B cell (primary cell): ENCODE measurements at regions of chr19 and their contacts with region 1.

Region 1: DNA sequence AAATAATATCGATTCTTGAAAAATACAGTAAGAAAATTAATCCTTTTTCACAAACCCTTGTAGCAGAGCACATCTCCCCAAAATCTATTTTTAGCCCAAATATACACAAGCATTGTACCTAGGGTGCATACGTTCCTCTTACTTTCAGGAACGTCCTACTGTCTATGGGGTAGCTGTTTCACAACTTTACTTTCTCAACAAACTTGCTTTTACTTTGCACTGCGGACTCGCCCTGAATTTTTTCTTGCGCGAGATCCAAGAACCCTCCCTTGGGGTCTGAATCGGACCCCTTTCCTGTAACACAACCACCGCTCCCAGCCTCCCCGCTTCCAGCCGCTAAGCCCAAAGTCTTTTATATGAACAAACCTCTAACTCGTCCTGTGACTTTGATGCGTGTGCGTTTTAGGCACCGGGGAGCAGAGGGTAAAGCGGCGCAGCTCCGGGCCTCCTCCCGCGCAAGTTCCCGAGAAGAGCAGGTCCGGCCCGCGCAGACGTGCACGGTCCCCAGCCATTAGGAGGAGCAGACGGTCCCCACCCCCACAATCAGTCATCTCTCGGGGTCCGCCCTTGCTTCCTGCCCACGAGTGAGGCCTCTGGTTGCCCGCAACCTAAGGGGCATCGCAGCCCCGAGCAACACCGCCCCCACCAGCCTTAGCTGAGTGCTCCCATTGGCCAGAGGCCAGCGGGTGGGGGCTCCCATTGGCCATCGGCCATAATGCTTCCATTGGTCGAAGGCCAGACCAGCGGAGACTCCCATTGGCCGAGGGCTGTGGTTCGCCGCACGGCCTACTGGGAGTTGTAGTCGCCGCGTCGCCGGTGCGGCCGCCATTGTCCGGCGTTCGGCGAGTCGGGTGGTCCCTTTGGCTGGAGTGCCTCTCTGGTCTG is at the start of gene ZNF8:
- DNase-seq: peak; percentile 96
- ATAC-seq: peak; percentile 98
- H3K4me3 ChIP-seq: peak within 1 kb of the TSS; percentile 72 to 98 (median 95)
- H3K4me3 Mint-ChIP-seq: peak within 1 kb of the TSS; percentile 91
- H3K27ac ChIP-seq: peak within 1 kb of the TSS; percentile 73 to 86
- H3K27ac Mint-ChIP-seq: peak within 1 kb of the TSS; percentile 93
- H3K4me1 ChIP-seq: peaks cover 13 to 19% of the 10 kb centered on the region in 2 donors
- H3K4me1 Mint-ChIP-seq: peaks cover 38% of the 10 kb centered on the region
- H3K27me3 ChIP-seq: no peaks in the 10 kb centered on the region
- H3K27me3 Mint-ChIP-seq: no peaks in the 10 kb centered on the region
- CTCF ChIP-seq: no peak
- total RNA-seq, gene ZNF8: 7.9 and 8.0 TPM in 2 replicates

Region 2: DNA sequence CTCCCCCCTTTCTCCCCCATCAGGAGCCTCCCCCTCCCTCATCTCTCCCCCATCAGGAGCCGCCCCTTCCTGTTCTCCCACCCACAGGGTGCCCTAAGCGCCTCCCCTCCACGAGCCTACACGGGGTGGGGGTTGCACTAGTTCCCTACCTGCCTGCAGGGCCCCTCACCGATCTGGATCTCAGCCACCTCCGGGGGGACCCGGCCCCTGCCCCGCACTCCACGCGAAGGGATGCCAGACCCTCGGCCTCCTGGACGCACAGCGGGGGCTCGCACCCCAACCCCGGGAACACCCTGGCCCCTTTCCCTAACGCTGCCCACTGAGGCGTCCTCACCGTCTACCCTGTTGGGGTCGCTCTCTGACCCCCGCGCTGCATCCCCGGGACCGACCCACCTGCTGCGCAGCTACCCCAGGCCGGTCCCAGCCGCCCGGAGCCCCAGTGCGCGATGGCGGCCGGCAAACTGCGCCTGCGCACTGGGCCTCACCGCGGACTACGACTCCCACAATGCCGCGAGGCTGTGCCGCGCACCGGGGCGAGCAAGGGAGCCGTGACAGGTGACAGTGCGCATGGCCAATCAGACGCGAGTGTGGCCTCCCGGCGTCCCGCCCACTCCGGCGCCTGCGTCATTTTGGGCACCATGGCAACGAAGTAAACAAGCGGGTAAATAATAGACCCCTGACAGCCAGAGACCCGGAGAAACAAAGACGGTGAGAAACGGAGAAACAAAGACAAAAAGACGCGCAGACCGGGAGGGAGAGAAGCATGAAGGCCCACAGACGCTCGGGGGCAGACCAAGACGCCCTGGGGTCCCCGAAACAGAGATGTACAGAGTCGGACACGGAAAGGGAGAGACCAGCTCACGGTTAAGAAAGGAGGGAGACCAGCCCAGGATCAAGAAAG is 180.4 kb before region 1 on chr19 and contains the start of gene ZSCAN18:
- CTCF ChIA-PET with region 1: no interaction called
- POLR2A ChIA-PET with region 1: no interaction called
- intact Hi-C with region 1: loop called (anchors 1 kb)
- DNase-seq: peak; percentile 100
- ATAC-seq: peak; percentile 93
- H3K4me3 ChIP-seq: peak within 1 kb of the TSS; percentile 73 to 96 (median 92)
- H3K4me3 Mint-ChIP-seq: peak within 1 kb of the TSS; percentile 81
- H3K27ac ChIP-seq: peak within 1 kb of the TSS; percentile 98 to 100
- H3K27ac Mint-ChIP-seq: peak within 1 kb of the TSS; percentile 97
- H3K4me1 ChIP-seq: peaks cover 13 to 16% of the 10 kb centered on the region in 2 donors
- H3K4me1 Mint-ChIP-seq: peaks cover 18% of the 10 kb centered on the region
- H3K27me3 ChIP-seq: no peaks in the 10 kb centered on the region
- H3K27me3 Mint-ChIP-seq: peaks cover 3% of the 10 kb centered on the region
- CTCF ChIP-seq: no peak
- total RNA-seq, gene ZSCAN18: 84.9 and 90.5 TPM in 2 replicates

Region 3: GRCh38 chr19:58182989-58183816 is 95.2 kb before region 1 on chr19 and contains the start of gene ZNF274:
- CTCF ChIA-PET with region 1: no interaction called
- POLR2A ChIA-PET with region 1: interaction called, 3 read pairs
- intact Hi-C with region 1: loop called (anchors 1 kb)
- DNase-seq: peak; percentile 97
- ATAC-seq: peak; percentile 85
- H3K4me3 ChIP-seq: peak within 1 kb of the TSS; percentile 78 to 100 (median 88)
- H3K4me3 Mint-ChIP-seq: peak within 1 kb of the TSS; percentile 96
- H3K27ac ChIP-seq: peak within 1 kb of the TSS; percentile 99 to 100
- H3K27ac Mint-ChIP-seq: peak within 1 kb of the TSS; percentile 100
- H3K4me1 ChIP-seq: peaks cover 12 to 20% of the 10 kb centered on the region in 2 donors
- H3K4me1 Mint-ChIP-seq: peaks cover 26% of the 10 kb centered on the region
- H3K27me3 ChIP-seq: no peaks in the 10 kb centered on the region
- H3K27me3 Mint-ChIP-seq: no peaks in the 10 kb centered on the region
- CTCF ChIP-seq: no peak
- total RNA-seq, gene ZNF274: 83.7 and 85.4 TPM in 2 replicates

Region 4: GRCh38 chr19:58196901-58197616 is 81.3 kb before region 1 on chr19:
- CTCF ChIA-PET with region 1: no interaction called
- POLR2A ChIA-PET with region 1: no interaction called
- intact Hi-C with region 1: no loop called
- DNase-seq: peak; percentile 54
- ATAC-seq: no peak
- H3K4me3 ChIP-seq: peak overlapping the region in 1 of 5 experiments; percentile 16
- H3K4me3 Mint-ChIP-seq: no peak overlapping the region
- H3K27ac ChIP-seq: no peak overlapping the region
- H3K27ac Mint-ChIP-seq: no peak overlapping the region
- H3K4me1 ChIP-seq: no peaks in the 10 kb centered on the region
- H3K4me1 Mint-ChIP-seq: no peaks in the 10 kb centered on the region
- H3K27me3 ChIP-seq: no peaks in the 10 kb centered on the region
- H3K27me3 Mint-ChIP-seq: no peaks in the 10 kb centered on the region
- CTCF ChIP-seq: no peak

Region 5: GRCh38 chr19:58326914-58327726 is 48.7 kb after region 1 on chr19 and contains the start of gene ZSCAN22:
- CTCF ChIA-PET with region 1: interaction called, 3 read pairs
- POLR2A ChIA-PET with region 1: no interaction called
- intact Hi-C with region 1: loop called (anchors 1 kb)
- DNase-seq: peak; percentile 90
- ATAC-seq: peak; percentile 92
- H3K4me3 ChIP-seq: peak within 1 kb of the TSS; percentile 72 to 98 (median 83)
- H3K4me3 Mint-ChIP-seq: no peak within 1 kb of the TSS
- H3K27ac ChIP-seq: peak within 1 kb of the TSS; percentile 71 to 82
- H3K27ac Mint-ChIP-seq: no peak within 1 kb of the TSS
- H3K4me1 ChIP-seq: peaks cover 11 to 23% of the 10 kb centered on the region in 2 donors
- H3K4me1 Mint-ChIP-seq: no peaks in the 10 kb centered on the region
- H3K27me3 ChIP-seq: no peaks in the 10 kb centered on the region
- H3K27me3 Mint-ChIP-seq: no peaks in the 10 kb centered on the region
- CTCF ChIP-seq: no peak
- total RNA-seq, gene ZSCAN22: 7.1 TPM in 2 replicates

Region 6: DNA sequence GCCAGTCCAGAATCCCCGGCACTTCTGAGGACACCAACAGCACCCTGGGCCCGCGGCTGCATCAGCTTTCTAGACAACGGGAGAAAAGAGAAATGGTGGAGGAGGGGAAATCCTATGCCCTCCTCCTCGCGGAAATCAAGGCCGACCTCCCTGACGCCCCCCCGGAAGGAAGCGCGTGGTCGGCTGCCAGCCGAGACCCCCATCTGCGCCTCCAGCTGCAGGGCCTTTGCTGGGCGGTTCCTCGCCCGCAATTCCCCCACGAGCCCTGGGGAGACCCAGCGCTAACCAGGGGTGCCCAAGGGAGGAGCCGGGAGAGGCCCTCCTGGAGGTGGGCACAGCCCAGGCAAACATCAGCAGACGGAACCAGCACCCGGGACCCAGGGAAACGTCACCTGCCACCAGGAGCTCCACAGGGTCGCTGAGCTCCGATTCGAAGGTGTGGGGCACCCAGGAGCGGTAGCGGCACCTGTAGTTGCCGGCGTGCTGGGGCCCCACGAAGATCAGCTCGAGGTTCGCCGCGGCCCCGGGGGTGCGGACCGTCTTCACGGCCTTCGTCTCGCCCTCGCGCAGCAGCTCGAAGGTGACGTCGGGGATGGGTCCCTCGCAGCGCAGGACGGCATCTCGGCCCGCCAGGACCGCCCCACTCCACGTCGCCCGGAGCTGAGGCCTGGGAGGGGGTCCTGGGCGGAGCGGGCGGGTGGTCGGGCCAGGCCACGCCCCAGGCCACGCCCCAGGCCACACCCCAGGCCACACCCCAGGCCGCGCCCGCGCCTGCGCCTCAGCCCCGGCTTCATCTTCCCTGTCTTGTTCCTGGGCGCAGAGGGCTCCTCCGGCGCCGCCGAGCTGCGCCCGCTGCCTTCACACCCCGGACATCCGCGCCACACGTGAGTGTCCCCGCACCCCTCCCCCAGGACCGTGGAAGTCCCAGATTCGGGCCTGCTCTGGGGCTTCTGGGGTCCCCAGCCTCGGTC is 68.8 kb after region 1 on chr19:
- CTCF ChIA-PET with region 1: no interaction called
- POLR2A ChIA-PET with region 1: interaction called, 3 read pairs
- intact Hi-C with region 1: loop called (anchors 1 kb)
- DNase-seq: peak; percentile 91
- ATAC-seq: peak; percentile 96
- H3K4me3 ChIP-seq: peak overlapping the region; percentile 47 to 75 (median 62)
- H3K4me3 Mint-ChIP-seq: peak overlapping the region; percentile 96
- H3K27ac ChIP-seq: peak overlapping the region; percentile 59 to 77
- H3K27ac Mint-ChIP-seq: peak overlapping the region; percentile 89
- H3K4me1 ChIP-seq: peaks cover 16 to 28% of the 10 kb centered on the region in 2 donors
- H3K4me1 Mint-ChIP-seq: peaks cover 30% of the 10 kb centered on the region
- H3K27me3 ChIP-seq: no peaks in the 10 kb centered on the region
- H3K27me3 Mint-ChIP-seq: no peaks in the 10 kb centered on the region
- CTCF ChIP-seq: no peak